ENCODE measurements at regions of chr13 and their contacts with region 1.

Region 1: DNA sequence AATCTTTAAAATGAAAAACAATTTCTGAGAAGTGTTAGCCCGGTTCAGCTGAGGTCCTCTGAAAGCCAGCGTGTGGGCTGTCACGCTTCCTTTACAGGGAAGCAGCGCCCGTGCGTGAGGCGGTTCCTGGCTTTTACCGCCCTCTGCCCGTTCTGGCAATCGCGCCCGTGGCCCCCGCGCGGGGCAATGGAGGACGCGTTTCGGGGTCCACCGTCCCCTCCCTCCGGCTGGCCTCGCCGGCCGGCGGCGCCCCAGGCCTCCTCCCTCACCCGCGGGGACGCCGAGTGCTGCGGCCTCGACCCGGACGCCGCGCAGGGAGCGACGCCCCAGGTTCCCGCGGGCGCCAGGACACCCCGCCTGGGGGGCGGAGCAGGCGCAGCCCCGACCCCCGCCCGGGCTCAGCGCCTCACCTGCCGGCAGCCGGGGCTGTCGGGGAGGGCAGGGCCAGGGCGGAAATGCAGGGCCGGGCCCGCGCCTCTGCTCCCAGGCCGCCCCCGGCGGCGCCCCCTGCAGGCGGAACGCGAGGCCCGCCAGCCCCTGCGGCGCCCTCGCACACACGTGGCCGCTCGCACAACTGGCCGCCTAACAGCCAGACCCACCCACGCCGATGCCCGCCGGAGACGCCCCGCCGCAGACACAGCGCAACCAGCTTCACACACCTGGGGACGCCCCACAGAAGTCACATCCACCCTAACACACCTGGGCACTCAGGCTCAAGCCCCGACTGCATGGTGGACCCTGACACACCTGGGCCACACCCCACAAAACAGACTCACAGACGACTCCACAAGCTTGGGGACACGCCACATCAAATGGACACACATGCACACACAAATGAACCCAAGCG is at the start of gene GGACT:
- DNase-seq: peak; percentile 75 to 90 (median 87)
- ATAC-seq: peak; percentile 97
- H3K4me3 ChIP-seq: peak within 1 kb of the TSS; percentile 78
- H3K4me3 Mint-ChIP-seq: peak within 1 kb of the TSS; percentile 82 to 92 (median 85)
- H3K27ac ChIP-seq: peak within 1 kb of the TSS; percentile 79
- H3K27ac Mint-ChIP-seq: peak within 1 kb of the TSS; percentile 81 to 95 (median 92)
- H3K4me1 ChIP-seq: peaks cover 7 to 42% of the 10 kb centered on the region in 2 donors
- H3K4me1 Mint-ChIP-seq: peaks cover 28 to 60% (median 50%) of the 10 kb centered on the region in 7 donors
- H3K27me3 ChIP-seq: no peaks in the 10 kb centered on the region
- H3K27me3 Mint-ChIP-seq: no peaks in the 10 kb centered on the region
- total RNA-seq, gene GGACT: 5.3 to 8.7 (median 7.4) TPM

Region 2: GRCh38 chr13:99969919-99970621 is 618.5 kb before region 1 on chr13:
- CTCF ChIA-PET with region 1: no interaction called
- POLR2A ChIA-PET with region 1: no interaction called
- intact Hi-C with region 1: loop called in 1 of 2 experiments (anchors 10 kb)
- DNase-seq: peak in 1 of 9 donors; percentile 49
- ATAC-seq: peak; percentile 48
- H3K4me3 ChIP-seq: no peak overlapping the region
- H3K4me3 Mint-ChIP-seq: peak overlapping the region; percentile 82 to 95 (median 86)
- H3K27ac ChIP-seq: no peak overlapping the region
- H3K27ac Mint-ChIP-seq: peak overlapping the region in 8 of 9 donors; percentile 53 to 91 (median 86)
- H3K4me1 ChIP-seq: peaks cover 0 to 10% of the 10 kb centered on the region in 2 donors
- H3K4me1 Mint-ChIP-seq: peaks cover 18 to 34% (median 25%) of the 10 kb centered on the region in 7 donors
- H3K27me3 ChIP-seq: peaks cover 47 to 74% of the 10 kb centered on the region in 2 donors
- H3K27me3 Mint-ChIP-seq: peaks cover 68 to 79% (median 70%) of the 10 kb centered on the region in 5 donors

Region 3: DNA sequence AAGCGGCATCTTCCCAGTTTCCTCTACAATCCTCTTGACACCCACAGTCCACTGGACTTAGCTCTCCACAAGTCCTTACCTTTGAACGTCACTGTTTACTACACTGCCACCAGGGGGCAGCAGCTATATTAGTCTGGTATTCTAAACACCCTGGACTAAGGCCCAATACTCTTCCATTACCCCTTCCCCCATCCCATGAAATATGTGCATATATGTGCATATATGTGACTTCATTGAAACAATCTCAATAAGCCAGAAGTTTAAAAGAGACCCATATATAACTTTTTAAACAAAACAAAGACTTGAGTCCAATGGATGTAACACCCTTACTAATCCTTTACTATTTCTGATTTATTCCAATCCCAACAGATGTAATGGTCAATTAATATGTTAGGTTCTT is 15.4 kb before region 1 on chr13:
- CTCF ChIA-PET with region 1: interaction called, 69 read pairs
- POLR2A ChIA-PET with region 1: interaction called, 37 read pairs
- intact Hi-C with region 1: loop called (anchors 1 kb)
- DNase-seq: peak; percentile 51 to 74 (median 63)
- ATAC-seq: peak; percentile 92
- H3K4me3 ChIP-seq: no peak overlapping the region
- H3K4me3 Mint-ChIP-seq: no peak overlapping the region
- H3K27ac ChIP-seq: no peak overlapping the region
- H3K27ac Mint-ChIP-seq: peak overlapping the region in 1 of 9 donors; percentile 24
- H3K4me1 ChIP-seq: peaks cover 0 to 6% of the 10 kb centered on the region in 2 donors
- H3K4me1 Mint-ChIP-seq: peaks cover 9 to 28% (median 16%) of the 10 kb centered on the region in 7 donors
- H3K27me3 ChIP-seq: no peaks in the 10 kb centered on the region
- H3K27me3 Mint-ChIP-seq: no peaks in the 10 kb centered on the region

Region 4: GRCh38 chr13:100674848-100675660 is 86.5 kb after region 1 on chr13:
- CTCF ChIA-PET with region 1: interaction called, 7 read pairs
- POLR2A ChIA-PET with region 1: interaction called, 8 read pairs
- intact Hi-C with region 1: loop called (anchors 1 kb)
- DNase-seq: peak; percentile 97 to 100 (median 99)
- ATAC-seq: peak; percentile 96
- H3K4me3 ChIP-seq: peak overlapping the region; percentile 93
- H3K4me3 Mint-ChIP-seq: peak overlapping the region; percentile 86 to 95 (median 90)
- H3K27ac ChIP-seq: peak overlapping the region; percentile 84
- H3K27ac Mint-ChIP-seq: peak overlapping the region; percentile 64 to 91 (median 86)
- H3K4me1 ChIP-seq: peaks cover 7 to 9% of the 10 kb centered on the region in 2 donors
- H3K4me1 Mint-ChIP-seq: peaks cover 17 to 38% (median 30%) of the 10 kb centered on the region in 7 donors
- H3K27me3 ChIP-seq: no peaks in the 10 kb centered on the region
- H3K27me3 Mint-ChIP-seq: peaks cover 0 to 20% (median 0%) of the 10 kb centered on the region in 5 donors

Region 5: GRCh38 chr13:101626925-101627555 is 1038.5 kb after region 1 on chr13:
- CTCF ChIA-PET with region 1: no interaction called
- POLR2A ChIA-PET with region 1: no interaction called
- intact Hi-C with region 1: loop called in 1 of 2 experiments (anchors 2 kb)
- DNase-seq: peak in 6 of 9 donors; percentile 24 to 62 (median 48)
- ATAC-seq: peak; percentile 73
- H3K4me3 ChIP-seq: peak overlapping the region; percentile 40
- H3K4me3 Mint-ChIP-seq: peak overlapping the region; percentile 63 to 92 (median 78)
- H3K27ac ChIP-seq: peak overlapping the region; percentile 67
- H3K27ac Mint-ChIP-seq: peak overlapping the region; percentile 15 to 89 (median 76)
- H3K4me1 ChIP-seq: peaks cover 29 to 33% of the 10 kb centered on the region in 2 donors
- H3K4me1 Mint-ChIP-seq: peaks cover 9 to 49% (median 48%) of the 10 kb centered on the region in 7 donors
- H3K27me3 ChIP-seq: no peaks in the 10 kb centered on the region
- H3K27me3 Mint-ChIP-seq: peaks cover 0 to 27% (median 0%) of the 10 kb centered on the region in 5 donors

Measured in naive thymus-derived CD4-positive, alpha-beta T cell (primary cell).